Tibial artery (tissue), 4 donors: ENCODE measurements at regions of chr14 and their contacts with region 1.

Region 1: DNA sequence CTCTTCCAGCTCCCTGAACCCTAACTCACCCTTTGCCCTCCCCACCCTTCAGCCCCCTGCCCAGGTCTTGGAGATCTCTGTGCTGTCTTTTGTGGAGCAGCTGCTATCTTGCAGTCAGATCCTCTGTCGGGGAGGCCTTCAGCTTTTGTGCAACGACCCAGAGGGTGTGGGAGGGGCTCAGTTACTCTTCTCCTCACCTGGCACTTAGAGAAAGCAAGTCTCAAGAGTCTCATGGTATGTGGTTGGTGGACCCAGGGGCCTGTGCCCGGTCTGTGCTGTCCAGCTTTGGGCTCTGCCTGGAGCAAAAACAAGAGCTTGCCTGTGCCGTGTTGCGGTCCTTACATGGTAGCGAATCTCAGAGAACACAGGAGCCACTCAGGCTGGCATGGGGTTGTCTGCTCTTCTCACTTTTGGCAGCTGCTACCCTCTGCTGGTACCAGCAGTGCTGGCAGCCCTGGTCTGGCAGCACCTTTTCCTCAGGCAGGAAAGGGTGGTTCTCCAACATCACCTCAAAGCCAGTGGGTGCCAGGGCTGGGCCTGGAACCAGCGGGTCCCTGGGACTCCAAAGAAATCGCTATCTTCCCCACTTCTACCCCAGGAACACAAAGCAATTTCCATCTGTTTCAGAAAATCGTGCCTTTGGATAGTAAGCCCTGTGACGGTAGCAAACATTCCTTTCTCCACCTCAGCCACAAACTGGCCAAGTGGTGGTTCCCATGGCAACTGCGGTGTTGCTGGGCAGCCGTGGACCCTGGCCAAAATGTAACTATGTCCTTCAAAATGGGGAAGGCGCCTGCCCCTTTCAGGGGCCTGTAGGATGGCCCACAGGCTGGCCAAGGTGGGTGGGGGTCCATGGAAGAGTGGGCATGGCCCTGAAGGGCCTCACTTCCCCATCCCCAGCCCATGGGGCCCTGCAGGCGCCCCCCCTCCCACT is 90.0 kb downstream of the RIN3 start:
- DNase-seq: peak; percentile 51 to 89
- H3K4me3 ChIP-seq: no peak overlapping the region
- H3K27ac ChIP-seq: peak overlapping the region; percentile 77 to 85
- H3K4me1 ChIP-seq: peaks cover 0 to 45% (median 30%) of the 10 kb centered on the region in 4 donors
- H3K27me3 ChIP-seq: no peaks in the 10 kb centered on the region
- CTCF ChIP-seq: peak; percentile 60 to 64

Region 2: DNA sequence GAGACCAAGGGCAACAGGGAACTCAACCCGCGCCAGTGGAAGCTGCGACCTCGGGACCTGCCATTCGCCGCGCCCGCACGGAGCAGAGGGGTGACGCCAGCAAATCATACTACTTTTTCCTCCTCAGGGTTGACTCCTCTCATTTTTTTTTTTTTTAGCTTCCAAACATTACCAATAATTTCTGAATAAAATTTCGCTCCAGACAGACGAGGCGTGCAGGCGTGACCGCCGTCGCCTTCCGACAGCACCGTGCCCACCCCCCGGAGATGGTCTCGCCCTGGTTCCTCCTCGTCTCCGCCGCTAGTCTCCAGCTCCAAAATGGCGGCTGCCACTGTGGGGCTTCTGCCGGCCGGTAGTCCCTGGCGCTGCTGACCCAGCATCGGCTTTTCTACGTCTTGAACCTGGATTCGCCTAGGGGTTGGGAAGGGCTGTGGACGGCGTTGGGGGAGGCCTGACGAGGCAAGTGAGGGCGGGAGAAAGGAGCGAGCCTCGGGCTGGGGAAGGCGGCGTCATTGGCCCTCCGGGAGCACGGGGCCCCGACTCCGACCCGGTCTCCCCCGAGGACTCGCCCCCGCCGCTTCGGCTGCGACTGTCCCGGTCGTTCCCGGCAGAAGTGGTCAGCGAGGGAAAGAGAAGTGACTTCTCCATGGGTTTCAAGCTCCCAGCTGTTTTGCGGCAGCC is 481.8 kb before region 1 on chr14 and contains the starts of genes CPSF2 and NDUFB1:
- intact Hi-C with region 1: loop called (anchors 5 kb)
- DNase-seq: peak; percentile 78 to 88
- H3K4me3 ChIP-seq: peak within 1 kb of the TSS; percentile 84 to 99
- H3K27ac ChIP-seq: peak within 1 kb of the TSS; percentile 91 to 92
- H3K4me1 ChIP-seq: peaks cover 3 to 47% (median 30%) of the 10 kb centered on the region in 4 donors
- H3K27me3 ChIP-seq: no peaks in the 10 kb centered on the region
- CTCF ChIP-seq: peak in 1 of 2 experiments; percentile 41

Region 3: DNA sequence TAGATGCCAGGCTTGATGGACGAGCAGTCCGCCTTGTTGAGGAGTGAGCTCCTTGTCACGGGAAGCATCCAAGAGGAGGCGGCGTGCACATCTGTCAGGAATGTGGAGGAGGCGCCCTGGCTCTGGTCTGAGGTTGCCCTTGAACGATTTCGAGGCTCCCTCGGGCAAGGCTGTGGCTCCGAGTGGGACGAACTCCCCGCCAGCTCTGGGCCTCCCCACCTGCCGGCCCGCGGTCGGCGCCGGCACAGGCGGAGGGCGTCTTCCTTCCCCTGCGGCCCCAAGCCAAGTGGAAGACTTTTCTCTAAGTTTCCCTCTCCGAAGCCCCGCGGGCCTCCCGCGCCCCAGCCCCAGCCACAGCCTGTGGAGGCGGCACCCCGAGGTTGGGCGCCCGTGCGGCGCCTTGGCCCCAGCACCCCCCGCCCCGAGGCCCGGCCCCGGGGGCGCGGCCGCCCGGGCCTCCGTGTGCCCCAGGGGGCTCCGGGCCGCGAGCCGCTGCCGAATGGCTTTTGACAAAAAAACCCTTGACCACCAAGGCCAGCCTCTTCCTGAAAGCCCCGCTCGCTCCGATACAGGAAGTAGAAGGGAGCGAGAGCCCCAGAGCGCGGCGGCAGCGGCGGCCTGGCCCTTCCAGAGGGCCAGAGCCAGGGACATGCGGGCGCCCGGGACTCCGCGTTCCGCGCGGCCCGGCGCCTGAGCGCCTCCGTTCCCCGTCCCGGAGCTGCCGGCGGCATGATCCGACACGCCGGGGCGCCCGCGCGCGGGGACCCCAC is 90.2 kb before region 1 on chr14 and contains the start of gene RIN3:
- intact Hi-C with region 1: loop called (anchors 10 kb)
- DNase-seq: peak in 1 of 2 donors; percentile 50
- H3K4me3 ChIP-seq: peak within 1 kb of the TSS; percentile 67 to 75
- H3K27ac ChIP-seq: peak within 1 kb of the TSS; percentile 72 to 82
- H3K4me1 ChIP-seq: peaks cover 0 to 35% (median 20%) of the 10 kb centered on the region in 4 donors
- H3K27me3 ChIP-seq: no peaks in the 10 kb centered on the region
- CTCF ChIP-seq: no peak

Region 4: DNA sequence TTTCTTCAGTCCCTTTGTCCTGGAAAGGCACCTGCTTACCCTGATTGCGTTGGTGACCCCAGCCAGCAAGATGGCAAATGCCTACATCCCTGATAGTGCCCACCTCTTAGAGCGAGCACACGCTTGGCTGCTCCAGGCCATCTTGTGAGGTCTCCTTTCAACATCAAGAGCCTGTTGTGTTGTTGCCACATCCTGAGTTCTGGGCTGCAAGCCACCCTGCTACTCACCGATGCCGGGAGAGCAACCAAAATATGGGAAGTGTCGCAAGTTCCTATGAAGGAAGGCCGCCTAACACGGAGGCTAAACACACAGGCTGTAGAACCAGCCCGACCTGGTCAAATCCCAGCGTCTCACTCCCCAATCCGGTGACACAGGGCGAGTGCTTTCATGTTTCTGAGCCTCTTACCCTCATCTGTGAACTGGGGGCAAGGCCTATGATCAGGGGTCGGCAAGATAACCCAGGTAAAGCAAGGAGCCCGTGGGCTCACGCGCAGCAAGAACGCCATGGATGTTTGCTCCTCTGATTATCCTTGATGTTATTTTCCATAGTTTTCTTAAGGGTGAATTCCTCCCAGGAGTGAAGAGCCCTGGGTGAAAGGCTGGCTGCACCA is 46.5 kb after region 1 on chr14:
- intact Hi-C with region 1: loop called (anchors 2 kb)
- DNase-seq: peak; percentile 74 to 85
- H3K4me3 ChIP-seq: no peak overlapping the region
- H3K27ac ChIP-seq: peak overlapping the region; percentile 93 to 97
- H3K4me1 ChIP-seq: peaks cover 3 to 49% (median 28%) of the 10 kb centered on the region in 4 donors
- H3K27me3 ChIP-seq: no peaks in the 10 kb centered on the region
- CTCF ChIP-seq: no peak